GM12878 (cell line): ENCODE measurements at regions of chr18 and their contacts with region 1.

Region 1: GRCh38 chr18:48675352-48675761 is 136.5 kb downstream of the CTIF start:
- DNase-seq: peak; percentile 51
- ATAC-seq: peak; percentile 98
- H3K4me3 ChIP-seq: no peak overlapping the region
- H3K27ac ChIP-seq: no peak overlapping the region
- H3K4me1 ChIP-seq: peaks cover 8% of the 10 kb centered on the region
- H3K27me3 ChIP-seq: no peaks in the 10 kb centered on the region
- CTCF ChIP-seq: peak; percentile 91 to 99 (median 97); a peak in 5 of 6 replicates
- EP300 ChIP-seq: 0 out of 4 replicates have a peak, but pooled peaks of 1 of the 2 experiments have one; percentile 30
- POLR2A ChIP-seq: no peak
- RAD21 ChIP-seq: peak; percentile 86

Region 2: DNA sequence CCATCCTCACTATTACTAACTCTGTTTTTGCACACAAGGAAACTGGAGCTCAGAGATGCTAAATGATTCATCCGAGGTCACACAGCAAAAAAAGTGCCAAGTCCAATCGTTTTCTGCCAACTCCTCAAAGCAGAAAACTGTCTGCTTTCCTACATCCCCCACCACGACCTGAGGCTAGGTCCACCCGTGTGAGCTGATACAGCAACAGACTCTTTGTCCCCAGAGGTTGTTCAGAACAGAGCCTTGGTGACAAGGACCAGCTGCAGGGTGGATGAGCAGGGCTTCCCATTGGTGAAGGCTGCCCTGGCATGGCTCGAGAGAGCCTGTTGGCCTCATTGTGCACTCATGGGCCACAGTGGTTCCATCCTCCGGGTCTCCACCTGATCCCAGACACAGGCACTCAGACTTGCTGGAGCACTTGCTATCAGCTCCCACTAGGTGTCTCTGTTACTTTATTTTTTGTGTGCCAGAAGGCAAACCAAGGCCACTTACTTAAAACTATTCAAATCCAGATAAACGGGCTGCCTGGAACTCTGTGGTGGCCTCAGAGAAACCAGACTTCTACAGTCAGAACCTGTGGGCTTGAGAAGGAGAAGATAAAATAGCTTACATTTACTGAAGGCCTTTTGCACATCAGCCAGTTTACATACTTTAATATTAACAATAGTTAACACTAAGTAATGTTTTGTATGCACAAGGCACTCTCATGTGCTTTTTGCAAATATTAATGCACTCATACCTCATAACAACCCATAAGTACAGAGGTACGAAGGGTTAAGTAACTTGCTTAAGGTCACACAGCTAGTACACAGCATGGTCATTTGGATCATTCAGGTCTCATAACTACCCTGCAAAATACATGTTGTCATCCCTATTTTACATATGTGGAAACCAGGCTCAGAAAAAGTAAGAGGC is 199.5 kb before region 1 on chr18:
- CTCF ChIA-PET with region 1: interaction called, 14 read pairs
- POLR2A ChIA-PET with region 1: no interaction called
- RAD21 ChIA-PET with region 1: interaction called, 6 read pairs
- SMC1A ChIA-PET with region 1: interaction called, 3 read pairs
- in situ Hi-C with region 1: no loop called
- intact Hi-C with region 1: no loop called
- DNase-seq: peak; percentile 5
- ATAC-seq: peak; percentile 94
- H3K4me3 ChIP-seq: no peak overlapping the region
- H3K27ac ChIP-seq: no peak overlapping the region
- H3K4me1 ChIP-seq: no peaks in the 10 kb centered on the region
- H3K27me3 ChIP-seq: peaks cover 0 to 2% of the 10 kb centered on the region in 2 experiments; a peak in 2 of 4 replicates
- CTCF ChIP-seq: peak; percentile 75 to 83 (median 78)
- EP300 ChIP-seq: no peak
- POLR2A ChIP-seq: no peak
- RAD21 ChIP-seq: peak; percentile 90

Region 3: GRCh38 chr18:49021433-49022129 is 346.2 kb after region 1 on chr18:
- CTCF ChIA-PET with region 1: interaction called, 3 read pairs
- POLR2A ChIA-PET with region 1: no interaction called
- RAD21 ChIA-PET with region 1: no interaction called
- SMC1A ChIA-PET with region 1: interaction called, 4 read pairs
- in situ Hi-C with region 1: no loop called
- intact Hi-C with region 1: loop called (anchors 5 kb)
- DNase-seq: peak; percentile 15
- ATAC-seq: peak; percentile 87
- H3K4me3 ChIP-seq: no peak overlapping the region
- H3K27ac ChIP-seq: no peak overlapping the region
- H3K4me1 ChIP-seq: no peaks in the 10 kb centered on the region; the same call in 1 of the 2 replicates
- H3K27me3 ChIP-seq: no peaks in the 10 kb centered on the region
- CTCF ChIP-seq: peak; percentile 58 to 60 (median 59); a peak in 5 of 6 replicates
- EP300 ChIP-seq: no peak
- POLR2A ChIP-seq: no peak
- RAD21 ChIP-seq: peak; percentile 69

Region 4: DNA sequence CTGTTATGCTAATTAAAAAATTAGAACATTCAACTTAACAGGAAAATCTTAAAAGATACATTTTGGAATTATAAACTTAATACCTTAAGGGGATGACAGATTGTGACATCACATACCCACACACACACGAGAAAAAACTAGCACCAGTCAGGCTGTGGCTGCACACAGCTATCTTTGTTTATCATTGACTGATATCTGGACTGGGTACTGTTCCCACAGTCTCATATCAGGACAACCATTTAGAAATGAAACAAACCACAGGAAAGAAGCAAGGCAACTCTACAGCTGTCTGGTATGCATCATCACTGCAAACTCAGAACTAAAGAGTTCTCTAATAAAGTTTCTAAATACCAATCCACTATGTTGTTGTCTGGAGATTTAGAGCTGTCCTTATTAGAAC is 486.3 kb after region 1 on chr18:
- CTCF ChIA-PET with region 1: interaction called, 10 read pairs
- POLR2A ChIA-PET with region 1: no interaction called
- RAD21 ChIA-PET with region 1: interaction called, 3 read pairs
- SMC1A ChIA-PET with region 1: no interaction called
- in situ Hi-C with region 1: no loop called
- intact Hi-C with region 1: loop called (anchors 5 kb)
- DNase-seq: peak; percentile 90
- ATAC-seq: peak; percentile 96
- H3K4me3 ChIP-seq: no peak overlapping the region
- H3K27ac ChIP-seq: peak overlapping the region; percentile 71
- H3K4me1 ChIP-seq: peaks cover 35% of the 10 kb centered on the region
- H3K27me3 ChIP-seq: no peaks in the 10 kb centered on the region
- CTCF ChIP-seq: no peak
- EP300 ChIP-seq: peak; percentile 97 to 99
- POLR2A ChIP-seq: no peak
- RAD21 ChIP-seq: no peak

Region 5: GRCh38 chr18:49178736-49179135 is 503.4 kb after region 1 on chr18:
- CTCF ChIA-PET with region 1: interaction called, 99 read pairs
- POLR2A ChIA-PET with region 1: no interaction called
- RAD21 ChIA-PET with region 1: interaction called, 11 read pairs
- SMC1A ChIA-PET with region 1: interaction called, 4 read pairs
- in situ Hi-C with region 1: loop called (anchors 5 kb)
- intact Hi-C with region 1: loop called (anchors 1 kb)
- DNase-seq: no peak
- ATAC-seq: peak; percentile 71
- H3K4me3 ChIP-seq: no peak overlapping the region
- H3K27ac ChIP-seq: no peak overlapping the region
- H3K4me1 ChIP-seq: peaks cover 9% of the 10 kb centered on the region; the same call in 1 of the 2 replicates
- H3K27me3 ChIP-seq: no peaks in the 10 kb centered on the region
- CTCF ChIP-seq: peak; percentile 49 to 62 (median 56); a peak in 5 of 6 replicates
- EP300 ChIP-seq: no peak
- POLR2A ChIP-seq: no peak
- RAD21 ChIP-seq: peak; percentile 83

Region 6: GRCh38 chr18:49400398-49401072 is 725.2 kb after region 1 on chr18:
- CTCF ChIA-PET with region 1: no interaction called
- POLR2A ChIA-PET with region 1: no interaction called
- RAD21 ChIA-PET with region 1: no interaction called
- SMC1A ChIA-PET with region 1: no interaction called
- in situ Hi-C with region 1: loop called (anchors 25 kb)
- intact Hi-C with region 1: no loop called
- DNase-seq: no peak
- ATAC-seq: peak; percentile 74
- H3K4me3 ChIP-seq: peak overlapping the region; percentile 12; the same call in 1 of the 2 replicates
- H3K27ac ChIP-seq: peak overlapping the region; percentile 59
- H3K4me1 ChIP-seq: peaks cover 30% of the 10 kb centered on the region
- H3K27me3 ChIP-seq: no peaks in the 10 kb centered on the region
- CTCF ChIP-seq: no peak
- EP300 ChIP-seq: no peak
- POLR2A ChIP-seq: no peak
- RAD21 ChIP-seq: no peak

Region 7: GRCh38 chr18:49447810-49448745 is 772.7 kb after region 1 on chr18:
- CTCF ChIA-PET with region 1: interaction called, 4 read pairs
- POLR2A ChIA-PET with region 1: no interaction called
- RAD21 ChIA-PET with region 1: interaction called, 7 read pairs
- SMC1A ChIA-PET with region 1: interaction called, 5 read pairs
- in situ Hi-C with region 1: no loop called
- intact Hi-C with region 1: loop called (anchors 2 kb)
- DNase-seq: no peak
- ATAC-seq: peak; percentile 89
- H3K4me3 ChIP-seq: no peak overlapping the region
- H3K27ac ChIP-seq: no peak overlapping the region
- H3K4me1 ChIP-seq: no peaks in the 10 kb centered on the region
- H3K27me3 ChIP-seq: no peaks in the 10 kb centered on the region
- CTCF ChIP-seq: peak; percentile 39 to 50 (median 43)
- EP300 ChIP-seq: no peak
- POLR2A ChIP-seq: no peak
- RAD21 ChIP-seq: peak; percentile 44